AG04449 (cell line): ENCODE measurements at regions of chr12 and their contacts with region 1.

Region 1: DNA sequence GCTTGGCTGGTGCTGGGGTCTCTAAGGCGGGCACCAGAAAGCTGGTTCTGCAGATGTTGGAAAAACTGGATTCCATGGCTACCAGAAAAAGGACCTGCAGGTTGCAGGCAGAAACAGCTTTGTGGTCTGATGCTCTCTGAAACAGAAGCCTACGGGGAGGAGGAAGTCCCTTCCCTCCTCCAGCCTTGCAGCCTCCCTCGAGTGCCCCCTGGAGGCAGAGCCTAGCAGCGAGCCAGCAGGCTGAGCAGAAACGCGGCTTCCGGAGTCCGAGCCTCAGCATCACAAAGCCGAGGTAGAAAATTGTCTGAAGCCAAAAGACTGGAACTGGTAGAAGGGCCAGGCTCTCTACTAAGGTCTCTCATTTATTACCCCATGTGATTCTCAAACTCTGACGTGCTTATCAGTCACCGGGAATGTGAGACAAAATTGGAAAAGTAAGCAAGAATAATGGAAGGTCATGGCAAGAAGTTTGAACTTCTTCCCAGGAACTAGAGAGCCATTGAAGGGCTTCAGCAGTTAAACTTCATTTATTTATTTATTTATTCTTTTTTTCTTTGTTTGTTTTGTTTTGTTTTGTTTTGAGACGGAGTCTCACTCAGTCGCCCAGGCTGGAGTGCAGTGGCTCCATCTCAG is 82.2 kb upstream of the CPSF6 start:
- DNase-seq: no peak
- H3K4me3 ChIP-seq: no peak overlapping the region
- CTCF ChIP-seq: peak; percentile 100

Region 2: GRCh38 chr12:68865399-68866164 is 291.6 kb before region 1 on chr12:
- CTCF ChIA-PET with region 1: interaction called, 16 read pairs
- POLR2A ChIA-PET with region 1: no interaction called
- DNase-seq: no peak
- H3K4me3 ChIP-seq: no peak overlapping the region
- CTCF ChIP-seq: no peak

Region 3: DNA sequence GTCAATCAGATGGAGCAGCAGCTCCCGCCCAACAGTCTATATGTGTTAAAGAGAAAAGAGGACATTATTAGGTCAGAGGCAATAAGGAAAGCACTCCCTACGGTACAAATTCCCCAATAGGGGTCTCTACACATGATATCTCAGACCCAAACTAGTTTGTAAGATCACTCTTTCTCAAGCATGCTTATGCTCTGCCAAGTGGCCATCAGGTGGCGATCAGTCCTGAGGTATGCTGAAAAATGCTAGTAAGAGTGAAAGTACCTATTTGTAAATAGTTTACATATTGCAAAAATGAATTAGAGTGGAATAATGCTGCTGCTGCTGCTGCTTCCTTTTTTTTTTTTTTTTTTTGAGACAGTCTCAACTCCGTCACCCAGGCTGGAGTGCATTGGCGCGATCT is 285.2 kb before region 1 on chr12:
- CTCF ChIA-PET with region 1: interaction called, 16 read pairs
- POLR2A ChIA-PET with region 1: no interaction called
- DNase-seq: no peak
- H3K4me3 ChIP-seq: no peak overlapping the region
- CTCF ChIP-seq: peak; percentile 38

Region 4: GRCh38 chr12:69136931-69137613 is 20.1 kb before region 1 on chr12:
- CTCF ChIA-PET with region 1: interaction called, 18 read pairs
- POLR2A ChIA-PET with region 1: no interaction called
- DNase-seq: no peak
- H3K4me3 ChIP-seq: no peak overlapping the region
- CTCF ChIP-seq: no peak

Region 5: GRCh38 chr12:69173368-69173767 is 16.2 kb after region 1 on chr12:
- CTCF ChIA-PET with region 1: interaction called, 112 read pairs
- POLR2A ChIA-PET with region 1: no interaction called
- DNase-seq: no peak
- H3K4me3 ChIP-seq: no peak overlapping the region
- CTCF ChIP-seq: no peak

Region 6: GRCh38 chr12:69254046-69254445 is 96.9 kb after region 1 on chr12:
- CTCF ChIA-PET with region 1: interaction called, 12 read pairs
- POLR2A ChIA-PET with region 1: no interaction called
- DNase-seq: no peak
- H3K4me3 ChIP-seq: no peak overlapping the region
- CTCF ChIP-seq: peak; percentile 24